ENCODE measurements at regions of chrX and their contacts with region 1.

Region 1: DNA sequence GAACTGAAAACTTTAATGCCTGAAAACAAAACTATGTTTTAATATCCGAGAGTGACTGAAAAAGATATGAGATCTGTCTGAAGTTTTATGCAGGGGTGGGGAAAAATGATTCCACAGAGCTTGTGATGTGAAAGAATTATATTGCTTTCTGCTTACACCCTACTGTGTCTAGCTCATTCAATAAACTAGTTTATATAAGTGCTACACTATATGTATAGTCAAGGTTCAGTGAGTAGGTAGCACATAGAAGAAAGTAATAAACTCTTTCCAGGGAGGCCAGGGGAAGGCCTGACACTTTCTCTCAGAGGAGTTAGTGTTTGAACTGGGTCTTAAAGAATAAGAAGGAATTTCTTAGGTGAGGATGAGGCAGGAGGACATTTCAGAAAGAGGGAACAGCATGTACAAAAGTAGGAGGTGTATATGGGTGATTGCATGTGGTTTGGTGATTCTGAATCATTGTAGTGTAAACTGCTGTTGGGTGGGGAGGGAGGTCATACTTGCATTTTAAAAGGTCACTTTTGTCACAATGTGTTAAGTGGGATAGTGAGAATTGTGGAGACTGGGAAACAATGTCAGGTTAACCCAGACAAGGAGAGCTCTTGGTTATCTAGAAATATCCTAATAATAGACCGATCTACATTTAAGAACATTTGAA is 25.1 kb upstream of the TEX13D start:
- DNase-seq: no peak
- H3K4me3 ChIP-seq: no peak overlapping the region
- H3K27ac ChIP-seq: no peak overlapping the region
- H3K4me1 ChIP-seq: no peaks in the 10 kb centered on the region
- H3K27me3 ChIP-seq: no peaks in the 10 kb centered on the region
- CTCF ChIP-seq: no peak

Region 2: DNA sequence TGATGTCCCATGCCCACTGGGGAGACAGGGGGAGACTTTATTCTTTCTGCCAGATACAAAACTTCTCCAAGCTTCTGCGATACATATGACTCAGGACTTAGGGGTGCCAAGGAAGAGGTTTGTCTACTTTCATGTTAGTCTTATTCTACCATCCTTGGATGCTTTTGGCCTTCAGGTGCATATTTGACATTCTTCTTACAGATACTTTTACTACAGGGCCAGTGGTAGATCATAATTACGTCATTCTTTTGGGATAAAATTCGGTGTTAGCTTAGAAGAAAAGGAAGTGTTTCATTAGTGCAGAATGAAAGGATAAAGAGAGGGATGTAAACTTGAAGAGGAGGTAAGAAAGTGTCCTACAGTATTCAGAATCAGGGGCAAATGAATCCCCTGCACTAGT is 819.7 kb before region 1 on chrX:
- CTCF ChIA-PET with region 1: no interaction called
- POLR2A ChIA-PET with region 1: interaction called, 13 read pairs
- intact Hi-C with region 1: no loop called
- DNase-seq: no peak
- H3K4me3 ChIP-seq: no peak overlapping the region
- H3K27ac ChIP-seq: no peak overlapping the region
- H3K4me1 ChIP-seq: no peaks in the 10 kb centered on the region
- H3K27me3 ChIP-seq: no peaks in the 10 kb centered on the region
- CTCF ChIP-seq: no peak

Region 3: GRCh38 chrX:123756320-123756719 is 551.1 kb before region 1 on chrX:
- CTCF ChIA-PET with region 1: no interaction called
- POLR2A ChIA-PET with region 1: no interaction called
- intact Hi-C with region 1: no loop called
- DNase-seq: no peak
- H3K4me3 ChIP-seq: no peak overlapping the region
- H3K27ac ChIP-seq: no peak overlapping the region
- H3K4me1 ChIP-seq: no peaks in the 10 kb centered on the region
- H3K27me3 ChIP-seq: no peaks in the 10 kb centered on the region
- CTCF ChIP-seq: no peak

Region 4: GRCh38 chrX:124274438-124275181 is 32.8 kb before region 1 on chrX:
- CTCF ChIA-PET with region 1: no interaction called
- POLR2A ChIA-PET with region 1: no interaction called
- intact Hi-C with region 1: no loop called
- DNase-seq: no peak
- H3K4me3 ChIP-seq: no peak overlapping the region
- H3K27ac ChIP-seq: no peak overlapping the region
- H3K4me1 ChIP-seq: no peaks in the 10 kb centered on the region
- H3K27me3 ChIP-seq: no peaks in the 10 kb centered on the region
- CTCF ChIP-seq: no peak

Region 5: DNA sequence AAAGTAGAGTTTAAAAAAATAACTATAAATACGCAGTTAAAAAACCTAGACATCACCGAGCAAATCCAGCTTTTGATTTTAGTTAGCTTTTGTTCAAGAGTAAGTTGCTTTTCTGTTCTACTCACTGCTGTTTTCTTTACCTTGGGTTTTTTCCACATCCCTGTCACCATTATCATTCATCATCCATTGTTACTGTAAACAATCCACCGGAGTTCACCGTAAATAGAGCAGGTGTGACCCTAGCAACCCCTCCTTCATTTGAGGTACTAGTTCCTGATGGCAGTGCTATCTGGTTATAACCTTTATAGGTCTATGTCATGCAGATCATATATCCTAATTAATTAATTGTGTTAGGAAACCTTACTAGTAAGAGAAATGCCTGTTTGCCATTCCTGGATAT is 17.9 kb before region 1 on chrX:
- CTCF ChIA-PET with region 1: no interaction called
- POLR2A ChIA-PET with region 1: no interaction called
- intact Hi-C with region 1: no loop called
- DNase-seq: no peak
- H3K4me3 ChIP-seq: no peak overlapping the region
- H3K27ac ChIP-seq: no peak overlapping the region
- H3K4me1 ChIP-seq: no peaks in the 10 kb centered on the region
- H3K27me3 ChIP-seq: no peaks in the 10 kb centered on the region
- CTCF ChIP-seq: no peak

Measured in PC-9 (cell line).